MCF 10A (cell line): ENCODE measurements at regions of chr2 and their contacts with region 1.

Region 1: DNA sequence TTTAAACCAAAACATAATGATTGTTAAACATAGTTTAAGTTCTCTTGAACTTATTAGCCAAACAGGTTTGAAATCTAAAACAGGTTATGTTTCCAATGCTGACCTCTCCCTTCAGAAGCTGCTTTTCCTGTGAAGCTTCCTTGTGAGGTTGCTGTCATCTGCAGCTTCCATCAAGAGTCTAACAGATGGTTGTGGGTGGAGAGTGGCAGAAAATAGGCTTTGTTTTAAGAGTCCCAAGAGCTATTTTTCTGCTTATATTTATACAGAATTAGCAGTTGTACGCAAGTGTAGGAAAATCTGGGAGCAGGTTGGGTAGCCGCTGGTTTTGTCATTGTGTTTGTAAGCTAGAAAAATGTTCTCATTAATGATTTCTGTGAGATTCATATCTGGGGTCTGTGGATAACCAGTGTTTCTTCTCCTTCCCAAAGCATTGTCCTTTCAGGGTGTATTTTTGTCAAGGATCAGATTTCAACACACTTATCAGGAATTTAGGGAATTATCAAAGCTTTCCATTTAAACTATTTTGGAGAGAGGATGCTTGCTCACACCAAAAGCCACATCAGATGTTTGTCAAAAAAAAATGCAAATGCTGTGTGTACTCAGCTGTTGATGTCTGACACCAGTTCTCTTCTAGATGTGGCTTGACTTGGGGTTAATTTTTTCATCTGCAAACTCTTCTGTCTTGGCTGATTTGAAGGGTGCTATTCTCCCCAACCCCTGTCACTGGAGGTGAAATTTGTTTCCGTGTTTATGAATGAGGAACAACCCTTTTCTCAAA is 78.1 kb upstream of the KIF5C start:
- DNase-seq: no peak
- H3K4me3 Mint-ChIP-seq: no peak overlapping the region
- H3K27ac Mint-ChIP-seq: no peak overlapping the region
- H3K4me1 Mint-ChIP-seq: peaks cover 5% of the 10 kb centered on the region
- H3K27me3 Mint-ChIP-seq: no peaks in the 10 kb centered on the region
- CTCF ChIP-seq: no peak

Region 2: DNA sequence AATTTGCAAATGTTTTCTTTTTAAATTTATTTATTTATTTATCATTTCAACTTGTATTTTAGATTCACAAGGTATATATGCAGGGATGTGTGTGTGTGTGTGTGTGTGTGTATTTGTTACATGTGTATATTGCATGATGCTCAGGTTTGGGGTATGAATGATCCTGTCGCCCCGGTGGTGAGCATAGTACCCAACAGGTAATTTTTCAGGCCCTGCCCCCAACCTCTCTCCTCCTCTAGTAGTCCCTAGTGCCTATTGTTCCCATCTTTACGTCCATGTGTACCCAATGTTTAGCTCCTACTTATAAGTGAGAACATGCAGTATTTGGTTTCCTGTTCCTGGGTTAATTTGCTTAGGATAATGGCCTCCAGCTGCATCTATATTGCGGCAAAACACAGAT is 45.1 kb after region 1 on chr2:
- CTCF ChIA-PET with region 1: no interaction called
- POLR2A ChIA-PET with region 1: no interaction called
- intact Hi-C with region 1: loop called (anchors 2 kb)
- DNase-seq: no peak
- H3K4me3 Mint-ChIP-seq: no peak overlapping the region
- H3K27ac Mint-ChIP-seq: no peak overlapping the region
- H3K4me1 Mint-ChIP-seq: no peaks in the 10 kb centered on the region
- H3K27me3 Mint-ChIP-seq: no peaks in the 10 kb centered on the region
- CTCF ChIP-seq: no peak